GM12878 (cell line): ENCODE measurements at regions of chr17 and their contacts with region 1.

Region 1: GRCh38 chr17:78840725-78841611 is at the start of gene USP36:
- DNase-seq: peak; percentile 97
- ATAC-seq: peak; percentile 93
- H3K4me3 ChIP-seq: peak within 1 kb of the TSS; percentile 75
- H3K27ac ChIP-seq: peak within 1 kb of the TSS; percentile 94
- H3K4me1 ChIP-seq: peaks cover 4% of the 10 kb centered on the region
- H3K27me3 ChIP-seq: no peaks in the 10 kb centered on the region
- CTCF ChIP-seq: peak in 2 of 3 experiments; percentile 2 to 45; a peak in 2 of 6 replicates
- EP300 ChIP-seq: 0 out of 4 replicates have a peak, but pooled peaks have one; percentile 2 to 55
- POLR2A ChIP-seq: peak; percentile 100
- RAD21 ChIP-seq: no peak
- polyA plus RNA-seq, gene USP36: 7.2 to 12.4 TPM

Region 2: GRCh38 chr17:78497115-78497540 is 343.8 kb before region 1 on chr17:
- CTCF ChIA-PET with region 1: interaction called, 8 read pairs
- POLR2A ChIA-PET with region 1: no interaction called
- RAD21 ChIA-PET with region 1: interaction called, 6 read pairs
- SMC1A ChIA-PET with region 1: interaction called, 6 read pairs
- in situ Hi-C with region 1: no loop called
- intact Hi-C with region 1: loop called (anchors 1 kb)
- DNase-seq: no peak
- ATAC-seq: peak; percentile 96
- H3K4me3 ChIP-seq: no peak overlapping the region
- H3K27ac ChIP-seq: no peak overlapping the region
- H3K4me1 ChIP-seq: no peaks in the 10 kb centered on the region; the same call in 1 of the 2 replicates
- H3K27me3 ChIP-seq: no peaks in the 10 kb centered on the region
- CTCF ChIP-seq: peak; percentile 81 to 94 (median 86)
- EP300 ChIP-seq: no peak
- POLR2A ChIP-seq: no peak
- RAD21 ChIP-seq: peak; percentile 84

Region 3: DNA sequence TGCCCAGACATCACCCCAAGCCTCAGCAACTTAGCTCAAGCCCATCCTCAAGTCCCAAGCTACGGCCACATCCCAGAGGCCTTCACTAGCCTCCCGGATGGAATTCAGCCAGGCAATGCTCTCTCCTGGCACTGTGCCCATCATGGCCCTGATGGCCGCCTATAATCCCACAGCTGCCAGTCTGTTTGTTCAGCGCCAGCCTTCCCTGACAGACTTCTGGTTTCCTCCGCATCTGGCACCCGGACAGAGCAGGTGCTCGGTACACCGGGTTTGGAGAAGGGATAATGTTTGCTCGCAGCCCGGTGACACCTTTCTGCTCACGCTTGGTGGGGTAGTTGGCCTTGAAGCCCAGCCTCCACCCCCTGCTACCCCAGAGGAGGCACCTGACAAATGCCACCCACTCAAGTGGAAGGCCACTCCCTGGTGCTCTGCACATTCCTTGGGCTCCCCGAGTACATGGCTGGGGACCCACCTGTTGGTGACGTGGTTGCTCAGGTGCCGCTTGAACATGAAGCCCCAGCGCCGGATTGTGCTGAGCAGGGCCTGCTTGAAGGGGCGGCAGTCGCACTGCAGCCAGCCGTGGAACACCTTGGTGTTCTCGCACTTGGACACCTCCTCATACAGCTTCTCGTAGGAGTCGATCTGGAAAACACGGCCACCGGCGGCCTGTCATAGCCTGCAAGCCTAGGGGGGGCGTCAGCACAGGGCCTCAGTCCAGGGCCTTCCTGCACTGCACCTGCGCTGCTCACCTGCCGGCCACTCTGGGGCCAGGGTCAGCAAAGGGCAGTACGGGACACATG is 310.9 kb before region 1 on chr17:
- CTCF ChIA-PET with region 1: no interaction called
- POLR2A ChIA-PET with region 1: no interaction called
- RAD21 ChIA-PET with region 1: no interaction called
- SMC1A ChIA-PET with region 1: no interaction called
- in situ Hi-C with region 1: no loop called
- intact Hi-C with region 1: no loop called
- DNase-seq: no peak
- ATAC-seq: no peak
- H3K4me3 ChIP-seq: no peak overlapping the region
- H3K27ac ChIP-seq: no peak overlapping the region
- H3K4me1 ChIP-seq: no peaks in the 10 kb centered on the region
- H3K27me3 ChIP-seq: no peaks in the 10 kb centered on the region; a peak in 1 of 4 replicates
- CTCF ChIP-seq: no peak
- EP300 ChIP-seq: no peak
- POLR2A ChIP-seq: no peak
- RAD21 ChIP-seq: no peak

Region 4: DNA sequence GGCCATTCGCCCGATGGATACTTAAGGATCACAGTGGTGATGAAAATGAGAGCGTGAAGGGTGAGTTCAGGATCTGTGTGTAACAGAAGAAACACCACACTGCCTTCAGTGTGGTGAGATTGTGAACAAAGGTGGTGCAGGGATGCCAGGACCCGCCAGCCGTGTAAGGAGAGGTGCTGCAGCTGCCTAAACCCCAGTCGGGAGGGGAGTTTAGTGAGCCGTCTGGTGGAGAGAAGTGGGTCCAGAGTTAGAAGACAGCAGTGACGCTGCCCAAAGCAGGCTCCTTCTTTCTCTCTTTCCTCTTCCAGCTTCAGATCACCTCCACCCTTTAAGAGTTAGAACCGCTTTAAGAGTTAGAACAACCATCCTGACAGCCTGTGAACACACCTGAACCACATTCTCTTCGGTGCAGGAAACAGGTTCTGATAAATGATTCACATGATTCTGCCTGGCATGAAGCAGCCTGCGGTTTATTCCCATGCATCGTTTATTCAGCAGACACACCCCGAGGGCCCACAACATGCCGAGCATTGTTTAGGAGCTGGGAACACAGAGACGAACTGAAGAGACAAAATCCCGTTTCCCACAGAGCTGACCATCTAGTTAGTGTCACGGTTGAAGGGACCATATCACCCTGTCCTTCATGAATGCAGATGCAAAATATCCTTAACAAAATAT is 179.7 kb before region 1 on chr17:
- CTCF ChIA-PET with region 1: no interaction called
- POLR2A ChIA-PET with region 1: no interaction called
- RAD21 ChIA-PET with region 1: no interaction called
- SMC1A ChIA-PET with region 1: no interaction called
- in situ Hi-C with region 1: no loop called
- intact Hi-C with region 1: no loop called
- DNase-seq: no peak
- ATAC-seq: no peak
- H3K4me3 ChIP-seq: no peak overlapping the region
- H3K27ac ChIP-seq: no peak overlapping the region
- H3K4me1 ChIP-seq: peaks cover 6% of the 10 kb centered on the region
- H3K27me3 ChIP-seq: no peaks in the 10 kb centered on the region
- CTCF ChIP-seq: no peak
- EP300 ChIP-seq: no peak
- POLR2A ChIP-seq: no peak
- RAD21 ChIP-seq: no peak

Region 5: GRCh38 chr17:78852709-78853121 is 11.7 kb after region 1 on chr17:
- CTCF ChIA-PET with region 1: interaction called, 10 read pairs
- POLR2A ChIA-PET with region 1: no interaction called
- RAD21 ChIA-PET with region 1: no interaction called
- SMC1A ChIA-PET with region 1: no interaction called
- in situ Hi-C with region 1: no loop called
- intact Hi-C with region 1: no loop called
- DNase-seq: no peak
- ATAC-seq: no peak
- H3K4me3 ChIP-seq: no peak overlapping the region
- H3K27ac ChIP-seq: no peak overlapping the region
- H3K4me1 ChIP-seq: no peaks in the 10 kb centered on the region
- H3K27me3 ChIP-seq: no peaks in the 10 kb centered on the region; a peak in 1 of 4 replicates
- CTCF ChIP-seq: peak in 2 of 3 experiments; percentile 9 to 24; a peak in 1 of 6 replicates
- EP300 ChIP-seq: no peak
- POLR2A ChIP-seq: no peak
- RAD21 ChIP-seq: peak; percentile 36; the same call in 1 of the 2 replicates

Region 6: GRCh38 chr17:78899361-78900260 is 58.6 kb after region 1 on chr17:
- CTCF ChIA-PET with region 1: no interaction called
- POLR2A ChIA-PET with region 1: no interaction called
- RAD21 ChIA-PET with region 1: no interaction called
- SMC1A ChIA-PET with region 1: no interaction called
- in situ Hi-C with region 1: loop called (anchors 5 kb)
- intact Hi-C with region 1: no loop called
- DNase-seq: no peak
- ATAC-seq: no peak
- H3K4me3 ChIP-seq: no peak overlapping the region
- H3K27ac ChIP-seq: no peak overlapping the region
- H3K4me1 ChIP-seq: no peaks in the 10 kb centered on the region
- H3K27me3 ChIP-seq: 0 out of 4 replicates have a peak, but pooled peaks cover 0 to 4% of the 10 kb centered on the region in 2 experiments
- CTCF ChIP-seq: no peak
- EP300 ChIP-seq: no peak
- POLR2A ChIP-seq: no peak
- RAD21 ChIP-seq: no peak

Region 7: DNA sequence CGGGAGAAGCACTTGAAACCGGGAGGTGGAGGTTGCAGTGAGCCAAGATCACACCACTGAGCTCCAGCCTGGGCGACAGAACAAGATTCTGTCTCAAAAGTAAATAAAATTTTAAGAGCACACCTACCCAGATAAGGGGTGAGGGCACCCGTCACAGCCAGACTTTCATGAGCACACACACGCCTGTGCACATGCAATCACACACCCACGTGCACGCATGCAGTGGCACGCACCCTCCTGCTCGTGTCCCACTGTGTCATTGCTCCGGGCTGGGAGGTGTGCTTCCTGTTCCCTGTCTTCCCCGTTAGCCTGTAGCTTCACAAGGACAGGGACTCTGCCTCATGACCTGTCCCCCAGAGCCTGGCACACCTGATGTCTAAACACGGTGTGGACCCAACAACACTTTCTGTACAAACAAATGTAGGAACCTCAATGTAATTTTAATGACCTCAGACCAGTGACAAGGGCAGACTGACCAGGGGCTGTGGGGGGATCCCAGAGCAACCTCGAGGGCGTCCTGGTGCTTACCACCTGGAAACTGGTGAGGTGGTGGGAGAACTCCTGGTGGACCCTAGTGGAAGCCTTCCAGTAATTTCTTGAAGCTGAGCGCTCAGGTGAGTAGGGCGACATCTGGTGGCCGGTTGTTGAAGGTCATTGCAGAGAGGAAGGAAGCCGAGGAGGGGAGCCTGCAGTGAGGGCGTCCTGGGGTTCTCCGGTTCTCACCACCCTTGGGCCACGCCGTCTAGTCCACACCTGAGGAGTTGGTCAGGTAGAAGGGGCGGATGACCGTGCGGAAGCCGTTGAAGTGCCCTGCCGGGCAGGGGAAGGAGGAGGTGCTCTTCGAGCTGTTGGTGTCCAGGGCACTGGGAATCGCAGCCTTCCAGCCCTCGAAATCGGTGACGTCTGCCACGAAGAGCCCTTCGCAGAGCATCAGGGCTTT is 130.1 kb after region 1 on chr17:
- CTCF ChIA-PET with region 1: interaction called, 10 read pairs
- POLR2A ChIA-PET with region 1: no interaction called
- RAD21 ChIA-PET with region 1: interaction called, 3 read pairs
- SMC1A ChIA-PET with region 1: no interaction called
- in situ Hi-C with region 1: no loop called
- intact Hi-C with region 1: no loop called
- DNase-seq: no peak
- ATAC-seq: peak; percentile 90
- H3K4me3 ChIP-seq: no peak overlapping the region
- H3K27ac ChIP-seq: no peak overlapping the region
- H3K4me1 ChIP-seq: no peaks in the 10 kb centered on the region
- H3K27me3 ChIP-seq: no peaks in the 10 kb centered on the region
- CTCF ChIP-seq: peak; percentile 70 to 88 (median 78)
- EP300 ChIP-seq: no peak
- POLR2A ChIP-seq: no peak
- RAD21 ChIP-seq: peak; percentile 80